Activated CD4-positive, alpha-beta T cell treated with anti-CD3 and anti-CD28 coated beads, Interleukin-2, amount 10 ng/mL, durations not matched to agents 24 days and 14 days (primary cell): ENCODE measurements at regions of chr16 and their contacts with region 1.

Region 1: DNA sequence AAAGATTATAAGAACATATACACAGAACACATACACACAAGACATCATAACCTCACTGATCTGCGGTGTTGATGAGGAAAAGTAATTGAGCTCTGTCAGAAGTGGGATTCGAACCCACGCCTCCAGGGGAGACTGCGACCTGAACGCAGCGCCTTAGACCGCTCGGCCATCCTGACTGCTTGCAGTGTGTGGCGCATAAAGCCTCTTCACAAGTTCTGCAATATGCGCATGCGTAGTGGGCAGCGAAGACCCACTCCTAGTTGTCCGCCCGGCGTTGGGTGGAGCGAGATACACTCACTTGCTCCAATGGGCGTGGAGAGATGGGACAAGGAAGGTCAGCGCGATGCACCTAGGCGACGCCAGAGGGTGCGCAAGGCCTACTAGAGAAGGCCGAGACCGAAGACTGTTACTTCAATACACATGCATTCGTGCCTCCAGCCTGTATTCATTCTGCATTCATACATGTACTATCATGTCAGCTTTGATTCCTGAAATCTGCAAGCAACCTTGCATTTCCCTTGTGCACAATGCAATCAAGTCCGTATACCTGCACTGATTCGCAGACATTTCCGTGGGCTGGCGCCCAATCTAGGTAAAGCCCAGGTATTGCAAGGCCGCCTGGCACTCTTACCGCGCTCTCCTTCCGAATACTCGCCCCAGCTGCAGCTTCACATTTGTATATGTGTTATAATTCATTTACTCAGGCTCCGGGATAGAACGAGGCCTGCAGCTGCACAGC is 16.1 kb upstream of the PLLP start:
- DNase-seq: peak; percentile 100
- H3K4me3 Mint-ChIP-seq: no peak overlapping the region
- H3K27ac Mint-ChIP-seq: peak overlapping the region; percentile 30
- H3K4me1 Mint-ChIP-seq: peaks cover 23% of the 10 kb centered on the region
- H3K27me3 Mint-ChIP-seq: no peaks in the 10 kb centered on the region

Region 2: GRCh38 chr16:57084257-57084770 is 216.2 kb before region 1 on chr16:
- intact Hi-C with region 1: loop called (anchors 1 kb)
- DNase-seq: peak; percentile 92
- H3K4me3 Mint-ChIP-seq: no peak overlapping the region
- H3K27ac Mint-ChIP-seq: peak overlapping the region; percentile 10
- H3K4me1 Mint-ChIP-seq: peaks cover 6% of the 10 kb centered on the region
- H3K27me3 Mint-ChIP-seq: no peaks in the 10 kb centered on the region

Region 3: DNA sequence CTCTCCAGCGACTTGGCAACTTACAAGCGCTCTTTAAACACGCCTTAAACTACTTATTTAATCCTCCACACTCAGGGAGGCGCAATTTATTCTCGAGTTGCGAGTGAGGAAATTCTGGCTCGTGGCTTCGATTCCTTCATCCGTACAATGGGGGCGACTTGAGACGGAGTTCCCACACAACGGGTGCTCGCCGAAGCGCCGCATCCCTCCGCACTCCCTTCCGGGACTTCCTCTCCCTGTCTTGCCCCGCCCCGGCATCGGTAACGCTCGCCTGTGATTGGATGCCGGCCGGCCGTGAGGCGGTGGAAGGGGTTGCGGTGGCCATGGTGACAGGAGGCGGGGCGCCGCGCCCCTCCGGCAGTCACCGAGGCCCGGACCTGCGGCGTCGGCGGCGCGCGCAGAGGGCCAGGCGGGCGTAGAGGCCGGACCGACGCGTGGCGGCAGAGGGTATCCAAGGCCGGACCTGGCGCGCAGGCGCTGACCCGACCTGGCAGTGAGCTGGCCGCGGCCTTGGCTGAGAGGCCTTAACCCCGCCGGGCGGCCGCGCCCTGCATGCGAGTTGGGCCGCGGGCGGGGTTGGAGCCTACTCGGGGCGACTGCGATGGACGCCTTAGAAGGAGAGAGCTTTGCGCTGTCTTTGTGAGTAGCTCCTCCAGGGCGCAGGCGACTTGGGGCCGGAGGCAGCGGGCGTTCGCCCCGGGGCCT is 55.6 kb before region 1 on chr16 and contains the start of gene ARL2BP:
- intact Hi-C with region 1: loop called (anchors 1 kb)
- DNase-seq: peak; percentile 99
- H3K4me3 Mint-ChIP-seq: peak within 1 kb of the TSS; percentile 91
- H3K27ac Mint-ChIP-seq: peak within 1 kb of the TSS; percentile 95
- H3K4me1 Mint-ChIP-seq: peaks cover 14% of the 10 kb centered on the region
- H3K27me3 Mint-ChIP-seq: no peaks in the 10 kb centered on the region
- total RNA-seq, gene ARL2BP: 24.9 and 26.7 TPM in 2 replicates

Region 4: DNA sequence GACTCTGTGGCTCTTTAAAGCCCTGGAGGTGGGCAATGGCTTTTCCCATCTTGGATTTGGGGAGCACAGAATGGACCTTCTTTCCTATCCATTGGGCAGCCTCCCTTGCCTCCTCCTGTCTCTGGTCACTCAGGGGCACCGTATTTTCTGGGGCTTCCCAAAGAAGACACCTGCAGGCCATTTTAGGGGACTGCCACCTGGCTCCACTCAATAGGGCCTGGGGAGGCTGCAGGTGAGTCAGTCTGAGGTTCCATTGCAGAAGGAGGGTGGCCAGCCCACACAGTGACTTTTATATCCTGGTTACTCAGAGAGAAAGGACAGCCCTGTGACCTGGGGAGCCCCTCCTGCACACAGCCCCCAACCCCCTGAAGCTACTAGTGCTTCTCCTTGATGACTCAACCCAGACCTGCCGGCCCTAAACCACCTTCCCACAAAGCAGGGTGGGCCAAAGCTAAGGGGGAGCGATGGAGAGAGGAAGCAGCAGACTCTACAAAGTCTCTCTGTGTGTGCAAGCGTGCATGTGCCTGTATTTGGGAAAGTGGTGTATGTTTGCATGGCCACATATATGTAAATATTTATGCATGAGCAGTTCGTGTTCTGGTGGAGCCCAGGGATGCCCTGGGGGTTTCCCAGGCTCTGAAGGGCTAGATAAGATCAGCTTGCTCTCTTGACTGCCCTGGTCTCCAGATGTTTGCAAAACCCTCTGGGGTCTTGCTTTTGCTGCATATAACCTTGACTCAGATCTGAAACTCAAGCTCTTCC is 76.7 kb after region 1 on chr16:
- intact Hi-C with region 1: loop called (anchors 1 kb)
- DNase-seq: peak; percentile 59
- H3K4me3 Mint-ChIP-seq: no peak overlapping the region
- H3K27ac Mint-ChIP-seq: peak overlapping the region; percentile 29
- H3K4me1 Mint-ChIP-seq: peaks cover 19% of the 10 kb centered on the region
- H3K27me3 Mint-ChIP-seq: peaks cover 2% of the 10 kb centered on the region

Region 5: GRCh38 chr16:57447186-57447962 is 146.8 kb after region 1 on chr16 and contains the starts of genes CIAPIN1 and COQ9:
- intact Hi-C with region 1: loop called (anchors 1 kb)
- DNase-seq: peak; percentile 98
- H3K4me3 Mint-ChIP-seq: peak within 1 kb of the TSS; percentile 95
- H3K27ac Mint-ChIP-seq: peak within 1 kb of the TSS; percentile 92
- H3K4me1 Mint-ChIP-seq: peaks cover 24% of the 10 kb centered on the region
- H3K27me3 Mint-ChIP-seq: no peaks in the 10 kb centered on the region
- total RNA-seq, gene CIAPIN1: 85.4 TPM in 2 replicates
- total RNA-seq, gene COQ9: 55.2 and 56.7 TPM in 2 replicates

Region 6: GRCh38 chr16:57519796-57520360 is 219.3 kb after region 1 on chr16:
- intact Hi-C with region 1: loop called (anchors 1 kb)
- DNase-seq: peak; percentile 94
- H3K4me3 Mint-ChIP-seq: no peak overlapping the region
- H3K27ac Mint-ChIP-seq: no peak overlapping the region
- H3K4me1 Mint-ChIP-seq: peaks cover 7% of the 10 kb centered on the region
- H3K27me3 Mint-ChIP-seq: no peaks in the 10 kb centered on the region

Region 7: GRCh38 chr16:57734925-57735754 is 434.6 kb after region 1 on chr16:
- intact Hi-C with region 1: loop called (anchors 10 kb)
- DNase-seq: peak; percentile 99
- H3K4me3 Mint-ChIP-seq: peak overlapping the region; percentile 99
- H3K27ac Mint-ChIP-seq: peak overlapping the region; percentile 98
- H3K4me1 Mint-ChIP-seq: peaks cover 21% of the 10 kb centered on the region
- H3K27me3 Mint-ChIP-seq: no peaks in the 10 kb centered on the region